ENCODE measurements at regions of chr18 and their contacts with region 1.

Region 1: DNA sequence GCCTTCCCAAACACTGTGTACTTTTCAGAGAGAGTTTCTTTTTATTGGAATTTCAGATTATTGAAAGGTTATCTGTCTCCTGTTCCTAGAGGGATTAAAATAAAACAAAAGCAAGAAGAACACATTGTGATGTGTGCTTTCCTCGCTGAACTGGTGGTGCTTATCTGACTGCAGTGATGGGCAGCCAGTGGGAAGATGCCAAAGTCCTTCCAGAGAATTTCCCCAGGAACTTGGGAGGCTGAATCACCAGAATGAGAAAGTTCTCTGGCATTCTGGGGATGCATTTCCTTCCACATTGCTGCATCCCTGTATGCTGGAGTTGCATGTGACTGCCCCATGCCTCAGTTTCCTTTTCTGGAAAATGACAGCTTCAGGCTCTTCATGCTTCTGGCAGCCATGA is 53.9 kb upstream of the SEC11C start:
- DNase-seq: peak; percentile 41
- H3K4me3 ChIP-seq: no peak overlapping the region
- H3K27ac ChIP-seq: no peak overlapping the region
- H3K4me1 ChIP-seq: peaks cover 15% of the 10 kb centered on the region
- H3K27me3 ChIP-seq: peaks cover 0 to 2% of the 10 kb centered on the region in 2 experiments
- CTCF ChIP-seq: no peak
- POLR2A ChIP-seq: no peak

Region 2: DNA sequence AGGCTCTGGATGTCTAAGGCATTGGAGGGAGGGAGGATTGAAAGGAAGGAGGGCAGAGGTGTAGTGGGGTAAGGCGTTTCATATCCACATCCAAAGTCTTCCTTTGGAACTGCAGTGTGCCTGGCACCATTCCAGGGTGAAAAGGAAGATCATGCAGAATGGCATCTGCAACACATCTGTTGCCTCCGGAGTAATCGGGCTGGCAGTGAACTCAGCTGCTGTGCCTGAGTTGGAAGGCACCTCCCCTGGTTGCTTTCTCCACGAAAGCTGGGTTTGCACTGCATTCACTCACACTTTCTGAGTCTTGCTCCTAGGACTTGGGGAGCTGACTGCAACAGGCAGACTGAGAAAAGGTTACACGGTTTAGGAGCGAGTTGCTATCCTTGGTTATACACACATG is 23.6 kb after region 1 on chr18:
- CTCF ChIA-PET with region 1: interaction called, 11 read pairs
- POLR2A ChIA-PET with region 1: no interaction called
- dilution Hi-C with region 1: no loop called
- intact Hi-C with region 1: no loop called
- DNase-seq: no peak
- H3K4me3 ChIP-seq: no peak overlapping the region
- H3K27ac ChIP-seq: no peak overlapping the region
- H3K4me1 ChIP-seq: no peaks in the 10 kb centered on the region
- H3K27me3 ChIP-seq: peaks cover 7 to 11% of the 10 kb centered on the region in 2 experiments
- CTCF ChIP-seq: no peak
- POLR2A ChIP-seq: no peak